Activated CD4-positive, alpha-beta T cell treated with anti-CD3 and anti-CD28 coated beads for 36 hours (primary cell): ENCODE measurements at regions of chr19 and their contacts with region 1.

Region 1: GRCh38 chr19:37691881-37692504 is 27.6 kb downstream of the ZNF607 start:
- DNase-seq: peak; percentile 93
- ATAC-seq: peak; percentile 96
- H3K4me3 Mint-ChIP-seq: peak overlapping the region; percentile 92
- H3K27ac Mint-ChIP-seq: peak overlapping the region; percentile 95
- H3K4me1 Mint-ChIP-seq: peaks cover 9% of the 10 kb centered on the region
- H3K27me3 Mint-ChIP-seq: no peaks in the 10 kb centered on the region

Region 2: DNA sequence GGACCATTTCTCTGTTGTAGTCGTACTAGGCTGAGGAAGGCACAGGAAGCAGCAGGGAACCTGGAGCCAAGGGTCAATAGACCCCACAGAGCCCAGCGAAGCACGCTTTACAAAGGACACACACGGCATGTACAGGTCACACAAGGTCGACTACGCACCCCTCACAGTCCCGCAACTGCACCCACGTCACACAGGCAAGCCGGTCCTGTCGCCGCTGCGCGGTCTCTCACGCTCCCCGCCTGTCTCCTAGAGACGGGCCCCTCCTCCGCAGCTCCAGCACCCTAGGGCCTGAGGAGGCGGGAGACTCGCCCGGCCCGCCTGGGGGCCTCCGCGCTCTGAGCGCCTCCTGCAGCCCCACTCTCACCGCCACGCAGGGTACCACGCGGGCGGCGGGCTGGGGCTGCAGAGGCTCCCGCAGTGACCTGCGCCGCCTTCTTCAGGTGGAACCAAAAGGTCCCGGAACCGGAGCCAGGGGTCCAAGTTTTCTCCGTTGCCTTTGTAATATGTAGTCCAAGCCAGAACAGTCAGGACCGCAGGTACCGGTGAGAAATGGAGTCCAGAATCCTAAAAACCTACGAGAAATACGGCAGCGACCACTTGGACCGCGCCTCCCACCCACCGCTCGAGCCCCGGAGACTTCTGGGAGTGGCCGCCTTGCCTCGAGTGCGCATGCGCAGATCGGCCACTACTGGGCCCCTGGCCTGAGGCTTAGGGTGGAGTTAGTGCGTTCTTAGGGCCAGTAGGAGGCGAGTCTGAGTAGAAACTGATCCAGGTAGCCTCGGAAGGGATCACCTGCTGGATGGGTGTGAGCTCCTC is 27.3 kb after region 1 on chr19 and contains the start of gene ZNF607:
- CTCF ChIA-PET with region 1: no interaction called
- POLR2A ChIA-PET with region 1: no interaction called
- intact Hi-C with region 1: loop called in 1 of 2 experiments (anchors 2 kb)
- DNase-seq: peak; percentile 94
- ATAC-seq: peak; percentile 96
- H3K4me3 Mint-ChIP-seq: peak within 1 kb of the TSS; percentile 88
- H3K27ac Mint-ChIP-seq: peak within 1 kb of the TSS; percentile 89
- H3K4me1 Mint-ChIP-seq: peaks cover 19% of the 10 kb centered on the region
- H3K27me3 Mint-ChIP-seq: no peaks in the 10 kb centered on the region
- total RNA-seq, gene ZNF607: 4.9 to 8.3 TPM